CD4-positive, alpha-beta memory T cell (primary cell): ENCODE measurements at regions of chr7 and their contacts with region 1.

Region 1: GRCh38 chr7:23863209-23863798 is 153.3 kb downstream of the STK31 start:
- DNase-seq: peak in 4 of 5 donors; percentile 4 to 11 (median 9)
- H3K4me3 ChIP-seq: no peak overlapping the region
- H3K4me3 Mint-ChIP-seq: no peak overlapping the region
- H3K27ac ChIP-seq: no peak overlapping the region
- H3K27ac Mint-ChIP-seq: no peak overlapping the region
- H3K4me1 ChIP-seq: no peaks in the 10 kb centered on the region
- H3K4me1 Mint-ChIP-seq: peaks cover 0 to 1% (median 0%) of the 10 kb centered on the region in 4 donors
- H3K27me3 ChIP-seq: no peaks in the 10 kb centered on the region
- H3K27me3 Mint-ChIP-seq: peaks cover 0 to 2% of the 10 kb centered on the region in 2 donors

Region 2: DNA sequence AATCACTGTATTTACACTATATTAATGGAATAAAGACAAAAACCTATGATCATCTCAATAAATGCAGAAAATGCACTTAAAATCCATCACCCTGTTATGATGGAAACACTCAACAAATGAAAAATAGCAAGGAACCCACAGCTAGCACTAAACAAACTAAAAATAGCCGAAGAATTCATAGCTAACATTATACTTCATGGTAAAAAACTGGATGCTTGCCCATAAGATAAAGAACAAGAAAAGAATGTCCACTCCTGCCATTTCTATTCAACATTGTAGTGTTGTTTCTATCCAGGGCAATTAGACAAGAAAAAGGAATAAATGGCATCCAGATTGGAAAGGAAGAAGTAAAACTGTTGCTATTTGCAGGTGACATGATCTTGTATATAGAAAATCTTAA is 11.2 kb before region 1 on chr7:
- CTCF ChIA-PET with region 1: no interaction called
- POLR2A ChIA-PET with region 1: no interaction called
- intact Hi-C with region 1: no loop called
- DNase-seq: no peak
- H3K4me3 ChIP-seq: no peak overlapping the region
- H3K4me3 Mint-ChIP-seq: no peak overlapping the region
- H3K27ac ChIP-seq: no peak overlapping the region
- H3K27ac Mint-ChIP-seq: no peak overlapping the region
- H3K4me1 ChIP-seq: no peaks in the 10 kb centered on the region
- H3K4me1 Mint-ChIP-seq: no peaks in the 10 kb centered on the region
- H3K27me3 ChIP-seq: no peaks in the 10 kb centered on the region
- H3K27me3 Mint-ChIP-seq: peaks cover 0 to 2% of the 10 kb centered on the region in 2 donors

Region 3: GRCh38 chr7:24381894-24382505 is 518.7 kb after region 1 on chr7:
- CTCF ChIA-PET with region 1: no interaction called
- POLR2A ChIA-PET with region 1: no interaction called
- intact Hi-C with region 1: loop called (anchors 2 kb)
- DNase-seq: peak in 1 of 5 donors; percentile 4
- H3K4me3 ChIP-seq: no peak overlapping the region
- H3K4me3 Mint-ChIP-seq: no peak overlapping the region
- H3K27ac ChIP-seq: no peak overlapping the region
- H3K27ac Mint-ChIP-seq: no peak overlapping the region
- H3K4me1 ChIP-seq: no peaks in the 10 kb centered on the region
- H3K4me1 Mint-ChIP-seq: no peaks in the 10 kb centered on the region
- H3K27me3 ChIP-seq: no peaks in the 10 kb centered on the region
- H3K27me3 Mint-ChIP-seq: peaks cover 3% of the 10 kb centered on the region in 2 donors